Right ventricle myocardium superior (tissue), 1 donor: ENCODE measurements at regions of chr10 and their contacts with region 1.

Region 1: GRCh38 chr10:60114765-60115586 is 208.6 kb upstream of the CCDC6 start:
- DNase-seq: no peak
- ATAC-seq: peak; percentile 84

Region 2: DNA sequence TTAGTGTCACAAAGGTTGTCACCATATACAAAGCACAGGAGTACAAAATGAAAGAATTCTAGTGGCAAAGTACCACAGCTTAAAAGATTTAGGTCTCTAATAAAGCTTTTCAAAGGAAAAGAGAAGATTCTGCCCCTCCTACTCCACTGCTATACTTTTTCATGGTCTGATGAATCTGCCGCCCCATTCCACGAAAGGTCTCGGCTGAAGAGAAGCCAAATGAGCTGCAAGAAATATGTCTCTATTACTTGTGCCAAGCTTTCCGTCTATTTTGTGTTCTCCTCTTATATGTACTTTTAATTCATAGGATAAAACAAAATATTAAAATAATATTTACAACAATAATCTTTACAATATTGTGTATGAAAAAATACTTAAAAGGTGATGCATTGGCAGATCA is 52.1 kb after region 1 on chr10:
- intact Hi-C with region 1: no loop called
- DNase-seq: no peak
- ATAC-seq: no peak

Region 3: GRCh38 chr10:60186315-60187071 is 71.5 kb after region 1 on chr10:
- intact Hi-C with region 1: loop called (anchors 10 kb)
- DNase-seq: peak; percentile 68
- ATAC-seq: peak; percentile 83